Activated B cell treated with CpG ODN at 0.5 μM for 24 hours (primary cell): ENCODE measurements at regions of chr22 and their contacts with region 1.

Region 1: DNA sequence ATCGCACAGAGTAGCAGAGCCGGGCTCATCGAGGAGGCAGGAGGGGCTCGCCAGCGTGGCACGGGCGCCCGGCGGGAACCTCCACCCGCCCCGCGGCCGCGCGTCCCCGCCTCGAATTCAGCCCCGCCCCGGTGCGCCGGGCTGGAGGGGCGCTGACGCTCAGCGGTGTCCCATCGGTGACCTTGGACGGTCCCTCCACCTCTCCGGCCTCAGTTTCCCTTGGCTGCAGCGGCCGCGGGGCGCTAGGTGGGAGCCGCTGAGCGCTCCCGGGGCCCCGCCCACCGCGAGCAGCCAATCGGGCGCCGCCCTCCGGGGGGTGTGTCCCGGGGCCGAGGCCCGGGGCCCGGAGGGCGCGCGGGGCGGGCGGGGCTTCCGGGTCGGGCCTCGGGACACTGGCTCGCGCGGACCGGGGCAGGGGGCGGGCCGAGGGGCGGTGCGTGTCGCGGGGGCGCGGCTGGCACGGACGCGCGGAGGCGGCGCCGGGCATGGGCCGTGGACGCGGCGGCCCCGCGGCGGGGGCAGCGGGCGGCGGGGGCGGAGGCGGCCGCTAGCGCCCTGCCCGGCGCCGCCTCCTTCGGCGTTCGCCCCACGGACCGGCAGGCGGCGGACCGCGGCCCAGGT is at the start of gene PPARA:
- DNase-seq: peak; percentile 92
- ATAC-seq: peak; percentile 80
- H3K4me3 Mint-ChIP-seq: peak within 1 kb of the TSS; percentile 87
- H3K27ac Mint-ChIP-seq: peak within 1 kb of the TSS; percentile 73
- H3K4me1 Mint-ChIP-seq: peaks cover 23% of the 10 kb centered on the region
- H3K27me3 Mint-ChIP-seq: no peaks in the 10 kb centered on the region
- CTCF ChIP-seq: no peak
- total RNA-seq, gene PPARA: 17.7 and 23.0 TPM in 2 replicates

Region 2: GRCh38 chr22:46116491-46116958 is 33.6 kb before region 1 on chr22:
- CTCF ChIA-PET with region 1: no interaction called
- POLR2A ChIA-PET with region 1: no interaction called
- intact Hi-C with region 1: no loop called
- DNase-seq: peak; percentile 85
- ATAC-seq: peak; percentile 96
- H3K4me3 Mint-ChIP-seq: no peak overlapping the region
- H3K27ac Mint-ChIP-seq: no peak overlapping the region
- H3K4me1 Mint-ChIP-seq: no peaks in the 10 kb centered on the region
- H3K27me3 Mint-ChIP-seq: peaks cover 2% of the 10 kb centered on the region
- CTCF ChIP-seq: no peak

Region 3: GRCh38 chr22:46129390-46130041 is 20.6 kb before region 1 on chr22:
- CTCF ChIA-PET with region 1: no interaction called
- POLR2A ChIA-PET with region 1: interaction called, 4 read pairs
- intact Hi-C with region 1: loop called (anchors 1 kb)
- DNase-seq: peak; percentile 41
- ATAC-seq: peak; percentile 93
- H3K4me3 Mint-ChIP-seq: peak overlapping the region; percentile 81
- H3K27ac Mint-ChIP-seq: peak overlapping the region; percentile 63
- H3K4me1 Mint-ChIP-seq: peaks cover 23% of the 10 kb centered on the region
- H3K27me3 Mint-ChIP-seq: no peaks in the 10 kb centered on the region
- CTCF ChIP-seq: no peak

Region 4: GRCh38 chr22:46309526-46310085 is 159.5 kb after region 1 on chr22:
- CTCF ChIA-PET with region 1: no interaction called
- POLR2A ChIA-PET with region 1: interaction called, 12 read pairs
- intact Hi-C with region 1: no loop called
- DNase-seq: no peak
- ATAC-seq: no peak
- H3K4me3 Mint-ChIP-seq: no peak overlapping the region
- H3K27ac Mint-ChIP-seq: no peak overlapping the region
- H3K4me1 Mint-ChIP-seq: no peaks in the 10 kb centered on the region
- H3K27me3 Mint-ChIP-seq: no peaks in the 10 kb centered on the region
- CTCF ChIP-seq: no peak

Region 5: GRCh38 chr22:46335201-46336118 is 185.3 kb after region 1 on chr22 and contains the start of gene TRMU:
- CTCF ChIA-PET with region 1: no interaction called
- POLR2A ChIA-PET with region 1: no interaction called
- intact Hi-C with region 1: loop called (anchors 1 kb)
- DNase-seq: peak; percentile 82
- ATAC-seq: peak; percentile 92
- H3K4me3 Mint-ChIP-seq: peak within 1 kb of the TSS; percentile 93
- H3K27ac Mint-ChIP-seq: peak within 1 kb of the TSS; percentile 92
- H3K4me1 Mint-ChIP-seq: peaks cover 26% of the 10 kb centered on the region
- H3K27me3 Mint-ChIP-seq: no peaks in the 10 kb centered on the region
- CTCF ChIP-seq: no peak
- total RNA-seq, gene TRMU: 52.2 and 60.0 TPM in 2 replicates